AG04450 (cell line): ENCODE measurements at regions of chr2 and their contacts with region 1.

Region 1: DNA sequence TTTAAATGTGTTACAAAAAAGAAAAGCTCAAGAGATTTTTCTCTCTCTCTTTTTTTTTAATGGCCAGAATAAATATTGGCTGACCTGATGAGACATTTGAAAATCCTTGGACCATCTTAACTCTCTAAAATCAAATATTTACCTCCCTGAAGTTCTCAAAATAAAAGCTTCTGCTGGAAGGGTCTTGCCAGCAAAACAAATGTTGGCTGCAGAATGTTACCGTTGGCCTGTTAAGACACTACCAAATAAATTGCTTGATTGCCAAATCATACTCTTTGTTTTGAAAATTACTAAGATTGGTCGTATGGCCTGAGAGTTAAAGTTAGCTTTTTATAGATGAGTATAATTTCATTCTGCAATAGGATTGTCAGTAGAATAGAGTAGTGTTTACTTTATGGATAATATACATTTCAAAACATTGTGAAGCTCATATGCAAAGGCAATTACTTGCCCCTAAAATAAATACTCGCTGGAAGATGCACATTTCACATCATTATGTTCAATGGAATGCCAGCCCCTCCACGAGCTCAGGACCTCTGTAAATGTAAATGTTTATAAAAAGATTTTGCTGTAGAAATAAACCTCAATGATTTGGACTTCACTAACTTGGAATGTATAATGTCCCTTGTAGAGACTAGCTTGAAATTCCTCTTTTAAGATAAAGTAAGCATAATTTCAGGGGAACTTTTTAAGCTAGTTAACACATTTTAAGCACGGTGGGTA is 193.4 kb downstream of the SOX11 start:
- DNase-seq: peak; percentile 24
- H3K4me3 ChIP-seq: no peak overlapping the region
- H3K27ac ChIP-seq: no peak overlapping the region
- H3K27me3 ChIP-seq: no peaks in the 10 kb centered on the region
- CTCF ChIP-seq: no peak

Region 2: DNA sequence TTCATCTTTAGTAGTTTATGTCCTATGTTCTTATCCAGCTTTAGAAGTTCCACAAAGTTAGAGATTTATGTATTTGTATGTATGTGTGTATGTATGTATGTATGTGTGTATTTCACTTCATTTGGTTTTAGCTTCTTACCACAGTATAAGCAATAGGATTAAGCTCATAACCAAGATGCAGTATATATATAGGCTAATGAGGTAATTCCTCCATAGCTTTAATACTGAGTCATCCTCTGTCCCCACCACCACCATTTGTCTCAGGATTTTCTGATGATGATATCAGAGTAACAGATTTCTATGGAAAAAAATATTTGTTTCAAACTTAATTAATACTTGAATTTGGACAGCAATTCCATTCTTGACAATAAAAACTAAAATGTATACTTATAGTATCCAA is 34.2 kb before region 1 on chr2:
- CTCF ChIA-PET with region 1: no interaction called
- POLR2A ChIA-PET with region 1: interaction called, 12 read pairs
- DNase-seq: no peak
- H3K4me3 ChIP-seq: no peak overlapping the region
- H3K27ac ChIP-seq: no peak overlapping the region
- H3K27me3 ChIP-seq: no peaks in the 10 kb centered on the region
- CTCF ChIP-seq: no peak